Aorta (tissue), 5 donors: ENCODE measurements at regions of chr7 and their contacts with region 1.

Region 1: GRCh38 chr7:77199013-77199966 is at the start of gene FGL2:
- DNase-seq: peak; percentile 85 to 91
- ATAC-seq: peak; percentile 93
- H3K4me3 ChIP-seq: peak within 1 kb of the TSS; percentile 84 to 98
- H3K27ac ChIP-seq: peak within 1 kb of the TSS; percentile 33 to 95
- H3K4me1 ChIP-seq: peaks cover 0 to 2% of the 10 kb centered on the region in 2 donors
- H3K27me3 ChIP-seq: no peaks in the 10 kb centered on the region
- total RNA-seq, gene FGL2: 208 to 246 TPM

Region 2: DNA sequence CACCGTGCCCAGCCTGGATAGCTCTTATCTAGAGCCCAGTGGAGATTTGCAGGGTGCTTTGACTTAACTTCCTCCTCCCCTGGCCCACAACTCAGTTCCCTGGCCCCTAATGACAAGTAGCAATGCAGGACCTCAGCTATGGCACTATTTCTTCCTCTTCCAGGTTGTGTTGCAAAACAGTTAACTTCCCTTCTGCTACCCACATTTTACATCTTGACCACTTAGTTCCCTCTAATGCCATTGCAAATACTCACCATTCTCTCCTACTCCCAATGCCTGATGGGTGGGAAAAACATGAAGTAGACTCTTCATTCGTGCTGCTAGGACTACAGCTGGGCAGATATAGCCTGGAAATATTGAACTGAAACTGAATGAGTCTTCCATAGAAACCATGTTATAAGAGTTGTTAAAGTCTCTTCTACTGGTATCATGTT is 39.4 kb after region 1 on chr7:
- intact Hi-C with region 1: loop called (anchors 5 kb)
- DNase-seq: peak in 1 of 2 donors; percentile 59
- ATAC-seq: peak; percentile 36
- H3K4me3 ChIP-seq: no peak overlapping the region
- H3K27ac ChIP-seq: peak overlapping the region in 1 of 2 donors; percentile 15
- H3K4me1 ChIP-seq: peaks cover 4 to 15% of the 10 kb centered on the region in 2 donors
- H3K27me3 ChIP-seq: no peaks in the 10 kb centered on the region

Region 3: DNA sequence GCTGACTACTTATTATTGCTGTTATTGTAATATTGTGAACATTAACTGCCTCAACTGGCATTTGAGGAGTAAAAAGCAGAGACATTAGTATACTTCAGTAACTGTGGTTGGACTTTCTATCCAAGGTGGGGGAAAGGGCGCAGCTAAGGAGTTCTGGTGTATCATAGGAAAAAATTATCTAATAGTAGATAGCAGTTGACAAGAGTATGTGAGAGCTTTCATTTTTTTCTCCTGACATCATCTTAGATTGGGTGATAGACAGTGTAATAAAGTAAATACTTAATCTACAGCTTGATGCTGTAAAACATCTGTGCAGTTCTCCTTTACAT is 668.2 kb after region 1 on chr7:
- intact Hi-C with region 1: no loop called
- DNase-seq: no peak
- ATAC-seq: no peak
- H3K4me3 ChIP-seq: no peak overlapping the region
- H3K27ac ChIP-seq: no peak overlapping the region
- H3K4me1 ChIP-seq: peaks cover 0 to 3% of the 10 kb centered on the region in 2 donors
- H3K27me3 ChIP-seq: no peaks in the 10 kb centered on the region